GM10248 (cell line): ENCODE measurements at regions of chr10 and their contacts with region 1.

Region 1: DNA sequence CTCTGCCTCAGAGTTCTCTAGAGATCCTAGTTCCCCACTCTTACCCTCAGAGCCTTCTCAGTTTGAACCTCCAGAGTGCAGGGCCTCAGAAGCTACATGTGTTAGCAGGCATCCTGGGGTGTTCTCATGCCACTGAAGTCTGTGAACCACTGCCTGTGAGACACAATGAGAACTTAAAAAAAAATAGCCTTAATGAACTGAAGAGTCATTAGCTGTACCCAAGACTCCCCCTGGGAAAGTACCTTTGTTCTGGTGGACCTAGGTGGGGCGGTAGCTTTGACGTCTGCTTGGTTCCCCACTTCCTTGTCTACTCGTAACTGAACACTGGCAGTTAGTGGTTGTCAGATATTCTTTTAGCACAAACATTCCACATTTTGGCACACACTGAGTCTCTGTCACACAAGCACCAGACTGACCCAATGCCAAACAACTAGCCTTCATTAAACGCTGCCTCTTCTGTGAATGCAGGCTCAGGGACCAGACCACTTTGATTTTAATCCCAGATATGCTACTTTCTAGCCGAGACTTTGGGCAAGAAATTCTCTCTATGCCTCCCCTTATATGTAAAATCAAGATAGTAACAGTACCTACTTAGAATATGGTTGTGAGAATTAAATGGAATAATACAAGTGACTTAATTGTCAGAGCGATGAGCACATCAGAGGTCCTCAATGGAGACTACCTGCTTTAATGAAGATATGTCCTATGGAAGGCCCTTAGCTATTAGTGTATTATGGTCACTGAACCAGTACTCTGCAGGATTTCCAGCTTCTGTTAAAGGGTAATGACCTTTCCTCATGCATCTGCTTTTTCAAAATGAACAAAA is 75.3 kb upstream of the CC2D2B start:
- DNase-seq: peak; percentile 67
- CTCF ChIP-seq: no peak

Region 2: DNA sequence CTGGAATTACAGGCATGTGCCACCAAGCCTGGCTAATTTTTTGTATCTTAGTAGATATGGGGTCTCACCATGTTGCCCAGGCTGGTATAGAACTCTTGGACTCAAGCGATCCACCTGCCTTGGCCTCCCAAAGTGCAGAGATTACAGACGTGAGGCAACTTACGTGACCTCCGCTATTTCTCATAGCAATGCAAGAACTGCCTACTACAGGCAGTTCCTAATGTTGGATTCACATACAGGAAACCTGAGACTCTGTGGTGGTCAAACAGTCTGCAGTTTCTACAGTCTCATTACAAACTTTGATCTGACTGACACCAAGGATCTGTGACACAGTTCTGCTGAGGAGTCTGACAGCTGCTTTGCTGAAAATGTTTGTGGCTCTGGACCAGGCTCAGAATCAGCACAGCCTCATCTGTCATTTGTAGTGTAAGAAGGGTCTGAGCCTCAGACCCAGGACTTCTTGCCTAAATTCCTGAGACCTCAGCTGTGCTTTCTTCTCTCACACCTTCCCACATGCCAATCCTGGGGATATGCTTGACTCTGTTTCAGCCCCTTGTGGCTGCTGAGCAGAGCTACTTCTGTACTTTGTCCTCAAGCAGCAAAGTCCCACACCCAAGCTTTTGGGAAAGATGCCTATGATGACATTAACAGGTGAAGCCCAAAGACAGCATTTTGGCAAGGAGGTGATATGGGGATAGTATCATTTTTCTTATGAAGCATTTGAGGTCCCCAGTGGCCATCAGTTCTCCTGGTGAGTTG is 942.0 kb before region 1 on chr10:
- CTCF ChIA-PET with region 1: no interaction called
- POLR2A ChIA-PET with region 1: no interaction called
- DNase-seq: no peak
- CTCF ChIP-seq: no peak

Region 3: DNA sequence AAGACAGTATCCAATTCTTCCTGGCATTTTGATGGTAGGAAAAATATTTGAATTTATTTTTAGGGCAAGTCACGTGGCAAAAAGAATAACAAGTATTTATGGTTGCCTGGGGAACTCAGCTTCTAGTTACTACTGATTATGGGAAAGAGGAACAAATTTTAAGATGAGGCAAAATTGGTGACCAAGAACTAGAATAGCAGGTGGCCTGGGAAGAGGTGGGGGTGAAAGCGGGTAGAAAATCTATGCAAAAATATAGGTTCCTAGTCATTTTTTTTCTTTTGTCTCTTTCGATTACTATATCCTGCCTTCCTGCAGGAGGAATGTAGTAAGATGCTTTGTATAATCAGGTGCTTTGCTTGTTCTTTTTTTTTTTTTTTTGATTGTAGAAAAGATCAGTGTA is 48.7 kb before region 1 on chr10:
- CTCF ChIA-PET with region 1: interaction called, 31 read pairs
- POLR2A ChIA-PET with region 1: interaction called, 19 read pairs
- DNase-seq: peak; percentile 26
- CTCF ChIP-seq: no peak

Region 4: DNA sequence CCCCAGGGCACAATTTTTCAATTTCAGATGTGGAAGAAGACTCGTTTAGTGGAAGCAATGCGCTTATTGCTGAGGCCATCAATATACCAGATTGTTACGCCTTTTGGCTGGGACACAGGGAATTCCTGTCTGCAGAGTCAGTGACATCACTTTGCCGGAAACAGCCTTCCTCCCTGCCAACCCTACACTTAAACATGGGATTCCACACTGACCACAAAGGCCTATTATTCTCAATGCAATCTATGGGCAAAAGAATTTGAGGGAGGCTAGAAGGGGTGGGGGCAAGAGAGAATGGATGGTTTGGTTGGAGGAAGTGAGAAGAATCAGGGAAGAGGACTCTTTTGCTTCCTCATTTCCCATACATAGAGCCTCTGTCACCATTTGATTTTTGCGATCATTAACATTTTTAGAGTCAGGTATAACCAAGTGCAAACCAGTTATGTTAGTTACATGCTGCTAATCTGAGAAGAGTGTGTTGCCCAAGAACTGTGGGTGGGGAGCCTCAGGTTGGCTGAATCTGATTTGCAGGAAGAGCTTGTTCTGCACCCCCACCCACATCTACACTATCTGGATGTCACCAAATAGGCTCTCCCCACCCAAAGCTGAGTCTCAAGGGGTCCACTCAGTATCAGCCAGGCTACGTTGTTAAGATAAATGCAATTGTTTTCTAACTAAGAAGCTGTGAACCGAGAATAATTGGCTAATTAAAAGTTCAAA is 18.3 kb before region 1 on chr10:
- CTCF ChIA-PET with region 1: interaction called, 10 read pairs
- POLR2A ChIA-PET with region 1: interaction called, 3 read pairs
- DNase-seq: no peak
- CTCF ChIP-seq: no peak

Region 5: GRCh38 chr10:95820363-95820762 is 12.1 kb before region 1 on chr10:
- CTCF ChIA-PET with region 1: interaction called, 14 read pairs
- POLR2A ChIA-PET with region 1: interaction called, 4 read pairs
- DNase-seq: peak; percentile 42
- CTCF ChIP-seq: peak; percentile 13

Region 6: DNA sequence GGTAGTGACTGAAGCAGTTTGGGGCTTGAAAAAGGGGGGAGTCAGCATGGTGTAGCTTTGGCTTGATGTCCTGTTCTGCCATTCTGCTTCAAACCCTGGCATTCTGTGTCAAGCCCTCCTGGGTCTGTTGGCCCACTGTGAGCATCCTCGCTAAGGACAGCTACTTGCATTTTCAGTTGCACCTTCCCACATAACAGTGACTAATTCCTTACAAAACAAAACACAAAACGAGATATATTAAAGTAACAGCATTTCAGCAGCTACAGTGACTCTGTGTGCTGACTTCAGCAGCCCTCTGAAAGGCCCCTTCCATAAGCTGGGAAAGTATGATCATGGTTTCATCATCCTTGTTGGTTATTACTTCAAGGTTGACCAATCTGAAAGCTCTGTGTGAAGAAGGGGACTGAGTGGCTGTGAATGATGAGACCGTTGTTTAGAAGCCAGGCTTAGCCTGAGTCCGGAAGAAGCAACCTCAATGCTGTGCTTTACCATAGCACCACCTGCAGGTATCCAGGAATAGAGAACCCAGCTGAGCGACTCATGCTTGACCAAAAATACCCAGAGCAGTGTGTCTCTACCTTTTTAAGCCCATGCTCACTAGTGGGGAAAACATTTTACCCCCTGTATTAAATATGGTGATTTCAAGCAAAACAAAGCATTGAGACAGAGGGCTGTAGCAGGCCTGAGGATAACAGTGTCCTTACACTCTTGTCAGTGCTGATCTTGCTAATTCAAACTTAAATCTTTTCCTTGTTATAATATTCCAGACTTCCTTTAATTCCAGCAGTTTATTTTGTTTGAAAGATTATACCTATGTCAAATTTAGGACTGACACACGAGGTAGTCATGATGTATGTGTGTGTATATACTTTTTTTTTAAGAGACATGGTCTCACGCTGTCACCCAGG is 32.7 kb after region 1 on chr10:
- CTCF ChIA-PET with region 1: interaction called, 16 read pairs
- POLR2A ChIA-PET with region 1: interaction called, 3 read pairs
- DNase-seq: peak; percentile 65
- CTCF ChIP-seq: peak; percentile 52